Motor neuron (in vitro differentiated cells): ENCODE measurements at regions of chr2 and their contacts with region 1.

Region 1: GRCh38 chr2:238523158-238524110 is 96.7 kb downstream of the ASB1 start:
- ATAC-seq: peak; percentile 79 to 97 (median 96)
- H3K4me3 ChIP-seq: no peak overlapping the region
- H3K27ac ChIP-seq: no peak overlapping the region
- H3K4me1 ChIP-seq: peaks cover 6 to 10% of the 10 kb centered on the region in 2 donors

Region 2: DNA sequence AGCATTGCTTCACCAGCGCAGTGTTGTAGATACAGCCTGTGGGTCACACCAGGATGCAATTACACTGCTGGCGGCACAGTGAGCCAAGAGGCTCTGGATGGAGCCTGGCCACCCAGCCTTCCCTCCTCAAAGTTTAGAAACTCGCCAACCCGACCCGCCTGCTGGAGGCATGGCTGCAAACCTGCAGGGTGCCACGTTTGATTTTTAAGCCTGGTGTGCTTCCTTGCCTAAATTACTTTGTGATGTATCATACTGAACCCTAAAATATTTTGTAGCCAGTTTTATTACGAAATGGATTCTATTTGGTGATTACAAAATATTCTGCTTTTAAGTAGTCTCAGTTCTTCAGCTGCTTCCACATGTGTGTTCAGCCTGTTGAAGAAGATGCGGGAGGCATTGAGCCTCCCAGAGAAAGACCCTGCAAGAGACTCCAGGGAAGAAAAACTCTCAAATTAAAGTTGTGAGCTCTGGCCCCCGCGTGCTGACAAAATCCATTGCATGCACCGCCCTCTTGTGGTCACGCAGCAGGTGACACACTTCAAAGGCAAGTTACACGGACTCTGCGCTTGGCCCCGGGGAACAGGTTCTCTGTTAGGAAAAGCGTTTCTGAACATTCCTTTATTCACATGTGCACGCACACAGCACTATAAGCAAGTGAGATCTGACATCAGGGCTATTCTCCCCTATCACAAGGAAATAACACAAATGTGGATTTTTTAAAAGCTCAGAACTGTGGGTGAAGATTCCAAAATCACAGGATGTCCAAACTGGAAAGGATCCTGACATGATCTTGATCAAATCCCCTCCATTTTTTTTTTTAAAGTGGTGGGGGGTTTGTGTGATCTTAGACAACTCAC is 261.5 kb after region 1 on chr2:
- in situ Hi-C with region 1: loop called in 1 of 9 experiments (anchors 10 kb)
- ATAC-seq: peak; percentile 40 to 87 (median 66)
- H3K4me3 ChIP-seq: no peak overlapping the region
- H3K27ac ChIP-seq: no peak overlapping the region
- H3K4me1 ChIP-seq: peaks cover 0 to 4% of the 10 kb centered on the region in 2 donors